HEK293 (cell line): ENCODE measurements at regions of chr14 and their contacts with region 1.

Region 1: GRCh38 chr14:61837336-61838229 is 75.4 kb downstream of the SNAPC1 start:
- H3K4me3 ChIP-seq: no peak overlapping the region
- H3K27ac ChIP-seq: no peak overlapping the region
- H3K4me1 ChIP-seq: no peaks in the 10 kb centered on the region
- CTCF ChIP-seq: peak; percentile 79

Region 2: GRCh38 chr14:61456720-61457119 is 380.9 kb before region 1 on chr14:
- CTCF ChIA-PET with region 1: interaction called, 67 read pairs
- POLR2A ChIA-PET with region 1: no interaction called
- H3K4me3 ChIP-seq: no peak overlapping the region
- H3K27ac ChIP-seq: no peak overlapping the region
- H3K4me1 ChIP-seq: no peaks in the 10 kb centered on the region
- CTCF ChIP-seq: peak; percentile 42; the same call in 1 of the 2 replicates

Region 3: GRCh38 chr14:61461808-61462275 is 375.7 kb before region 1 on chr14:
- CTCF ChIA-PET with region 1: interaction called, 67 read pairs
- POLR2A ChIA-PET with region 1: no interaction called
- H3K4me3 ChIP-seq: no peak overlapping the region
- H3K27ac ChIP-seq: no peak overlapping the region
- H3K4me1 ChIP-seq: peaks cover 10% of the 10 kb centered on the region
- CTCF ChIP-seq: peak; percentile 40

Region 4: DNA sequence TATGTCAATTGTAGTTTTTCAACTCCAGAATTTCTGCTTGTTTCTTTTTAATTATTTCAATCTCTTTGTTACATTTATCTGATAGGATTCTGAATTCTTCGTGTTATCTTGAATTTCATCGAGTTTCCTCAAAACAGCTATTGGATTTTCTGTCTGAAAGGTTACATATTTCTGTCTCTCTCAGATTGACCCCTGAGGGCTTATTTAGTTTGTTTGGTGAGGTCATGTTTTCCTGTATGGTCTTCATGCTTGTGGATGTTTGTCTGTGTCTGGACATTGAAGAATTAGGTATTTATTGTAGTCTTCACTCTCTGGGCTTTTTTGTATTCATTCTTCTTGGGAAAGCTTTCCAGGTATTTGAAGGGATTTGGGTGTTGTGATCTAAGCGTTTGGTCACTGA is 10.3 kb after region 1 on chr14:
- CTCF ChIA-PET with region 1: interaction called, 13 read pairs
- POLR2A ChIA-PET with region 1: no interaction called
- H3K4me3 ChIP-seq: no peak overlapping the region
- H3K27ac ChIP-seq: no peak overlapping the region
- H3K4me1 ChIP-seq: no peaks in the 10 kb centered on the region
- CTCF ChIP-seq: no peak